ENCODE measurements at regions of chr2 and their contacts with region 1.

Region 1: GRCh38 chr2:62801814-62802523 is 96.5 kb downstream of the EHBP1 start:
- DNase-seq: no peak
- H3K4me3 ChIP-seq: no peak overlapping the region
- H3K27ac ChIP-seq: no peak overlapping the region
- H3K4me1 ChIP-seq: no peaks in the 10 kb centered on the region
- H3K27me3 ChIP-seq: no peaks in the 10 kb centered on the region
- CTCF ChIP-seq: no peak
- POLR2A ChIP-seq: no peak

Region 2: GRCh38 chr2:62966991-62967390 is 165.0 kb after region 1 on chr2:
- intact Hi-C with region 1: loop called (anchors 5 kb)
- DNase-seq: no peak
- H3K4me3 ChIP-seq: no peak overlapping the region
- H3K27ac ChIP-seq: no peak overlapping the region
- H3K4me1 ChIP-seq: no peaks in the 10 kb centered on the region
- H3K27me3 ChIP-seq: no peaks in the 10 kb centered on the region
- CTCF ChIP-seq: no peak
- POLR2A ChIP-seq: no peak

Measured in breast epithelium (tissue), 4 donors.